MCF 10A (cell line): ENCODE measurements at regions of chr1 and their contacts with region 1.

Region 1: DNA sequence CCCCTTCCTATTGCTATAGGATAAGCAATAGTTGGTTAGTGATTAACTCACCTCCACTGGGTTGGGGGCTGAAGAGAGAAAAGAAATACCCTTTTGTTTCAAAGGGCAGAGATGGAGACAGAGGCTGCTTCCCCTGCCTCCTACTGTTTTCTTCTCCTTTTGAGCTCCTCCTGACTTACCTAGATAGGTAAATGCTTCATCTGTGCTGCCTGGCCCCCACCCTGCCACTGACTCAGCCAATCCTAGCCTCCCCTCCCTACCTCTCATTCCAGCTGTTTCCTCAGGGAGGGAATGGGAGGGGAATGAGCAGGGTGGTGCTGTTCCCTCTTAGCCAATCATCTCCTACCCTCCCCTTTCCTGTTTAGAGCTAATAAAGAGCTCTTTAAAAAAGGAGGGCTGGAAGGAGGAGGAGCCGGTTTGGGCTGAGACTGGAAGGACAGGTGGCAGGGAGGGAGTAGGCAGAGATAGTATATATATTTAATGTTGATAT is at the start of gene C1orf116:
- DNase-seq: peak; percentile 98
- H3K4me3 Mint-ChIP-seq: peak within 1 kb of the TSS; percentile 75
- H3K27ac Mint-ChIP-seq: peak within 1 kb of the TSS; percentile 86
- H3K4me1 Mint-ChIP-seq: peaks cover 79% of the 10 kb centered on the region
- H3K27me3 Mint-ChIP-seq: no peaks in the 10 kb centered on the region
- CTCF ChIP-seq: no peak
- total RNA-seq, gene C1orf116: 35.4 and 35.5 TPM in 2 replicates

Region 2: DNA sequence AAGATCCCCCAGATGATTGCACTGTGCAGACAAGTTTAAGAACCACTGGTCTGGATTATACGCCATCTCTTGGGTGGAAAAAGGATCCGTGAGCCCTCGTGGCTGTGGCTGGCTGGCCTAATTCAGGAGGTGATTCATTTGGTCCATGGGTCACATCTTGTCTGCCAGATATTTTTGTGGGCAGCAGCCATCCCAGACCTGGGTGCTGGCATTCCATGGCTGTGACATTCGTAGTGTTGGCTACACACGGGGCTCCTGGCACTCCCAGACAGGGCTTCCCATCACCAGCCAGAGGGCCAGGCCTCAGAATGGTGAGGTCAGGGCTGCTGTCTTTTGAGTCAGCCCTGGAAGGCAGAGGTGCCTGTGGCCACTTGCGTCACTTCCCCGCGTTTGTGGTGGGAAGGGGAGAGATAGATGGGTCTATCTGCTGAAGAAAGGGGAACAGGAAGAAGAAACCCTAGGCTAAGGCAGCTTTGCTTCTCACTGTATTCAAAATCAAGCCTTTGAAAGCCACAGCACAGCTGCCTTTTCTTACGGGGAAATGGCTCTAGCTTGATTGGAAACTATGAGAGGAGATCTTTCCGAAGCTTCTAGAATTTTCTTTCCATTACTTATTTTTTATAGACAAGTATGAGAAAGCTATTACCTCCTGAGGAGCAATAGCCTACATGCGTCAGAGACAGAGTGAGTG is 452.7 kb before region 1 on chr1:
- CTCF ChIA-PET with region 1: no interaction called
- POLR2A ChIA-PET with region 1: no interaction called
- intact Hi-C with region 1: no loop called
- DNase-seq: peak; percentile 23
- H3K4me3 Mint-ChIP-seq: no peak overlapping the region
- H3K27ac Mint-ChIP-seq: no peak overlapping the region
- H3K4me1 Mint-ChIP-seq: peaks cover 17% of the 10 kb centered on the region
- H3K27me3 Mint-ChIP-seq: no peaks in the 10 kb centered on the region
- CTCF ChIP-seq: no peak

Region 3: DNA sequence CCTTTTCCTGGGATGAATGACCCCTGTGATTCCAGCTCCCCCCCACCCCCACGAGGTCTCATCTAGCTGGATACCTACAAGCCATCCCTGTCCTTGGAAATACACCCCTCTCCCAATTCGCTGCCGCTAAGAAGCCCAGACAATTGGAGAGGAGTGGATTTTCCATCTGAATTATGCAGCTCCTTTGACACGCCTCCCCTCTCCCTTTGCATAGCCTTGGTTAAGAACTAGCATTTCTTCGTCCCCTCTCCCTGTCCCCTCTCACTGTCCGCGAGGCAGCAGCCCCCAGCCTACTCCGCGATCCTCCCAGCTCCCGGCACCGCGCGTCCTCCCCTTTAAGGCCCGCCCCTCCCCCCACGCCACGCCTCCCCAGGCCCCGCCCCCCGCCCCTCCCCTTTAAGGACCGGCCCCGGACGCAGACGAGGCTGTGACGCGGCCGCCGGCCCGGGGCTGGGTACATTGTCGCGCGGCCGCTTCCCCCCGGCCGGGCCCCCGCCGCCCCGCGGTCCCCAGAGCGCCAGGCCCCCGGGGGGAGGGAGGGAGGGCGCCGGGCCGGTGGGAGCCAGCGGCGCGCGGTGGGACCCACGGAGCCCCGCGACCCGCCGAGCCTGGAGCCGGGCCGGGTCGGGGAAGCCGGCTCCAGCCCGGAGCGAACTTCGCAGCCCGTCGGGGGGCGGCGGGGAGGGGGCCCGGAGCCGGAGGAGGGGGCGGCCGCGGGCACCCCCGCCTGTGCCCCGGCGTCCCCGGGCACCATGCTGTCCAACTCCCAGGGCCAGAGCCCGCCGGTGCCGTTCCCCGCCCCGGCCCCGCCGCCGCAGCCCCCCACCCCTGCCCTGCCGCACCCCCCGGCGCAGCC is 347.9 kb before region 1 on chr1 and contains the start of gene MAPKAPK2:
- CTCF ChIA-PET with region 1: no interaction called
- POLR2A ChIA-PET with region 1: interaction called, 12 read pairs
- intact Hi-C with region 1: no loop called
- DNase-seq: peak; percentile 83
- H3K4me3 Mint-ChIP-seq: peak within 1 kb of the TSS; percentile 93
- H3K27ac Mint-ChIP-seq: peak within 1 kb of the TSS; percentile 97
- H3K4me1 Mint-ChIP-seq: peaks cover 46% of the 10 kb centered on the region
- H3K27me3 Mint-ChIP-seq: no peaks in the 10 kb centered on the region
- CTCF ChIP-seq: no peak
- total RNA-seq, gene MAPKAPK2: 142 and 178 TPM in 2 replicates

Region 4: GRCh38 chr1:206890690-206891089 is 141.9 kb before region 1 on chr1:
- CTCF ChIA-PET with region 1: interaction called, 3 read pairs
- POLR2A ChIA-PET with region 1: interaction called, 20 read pairs
- intact Hi-C with region 1: no loop called
- DNase-seq: peak; percentile 96
- H3K4me3 Mint-ChIP-seq: peak overlapping the region; percentile 45
- H3K27ac Mint-ChIP-seq: peak overlapping the region; percentile 95
- H3K4me1 Mint-ChIP-seq: peaks cover 91% of the 10 kb centered on the region
- H3K27me3 Mint-ChIP-seq: no peaks in the 10 kb centered on the region
- CTCF ChIP-seq: no peak

Region 5: DNA sequence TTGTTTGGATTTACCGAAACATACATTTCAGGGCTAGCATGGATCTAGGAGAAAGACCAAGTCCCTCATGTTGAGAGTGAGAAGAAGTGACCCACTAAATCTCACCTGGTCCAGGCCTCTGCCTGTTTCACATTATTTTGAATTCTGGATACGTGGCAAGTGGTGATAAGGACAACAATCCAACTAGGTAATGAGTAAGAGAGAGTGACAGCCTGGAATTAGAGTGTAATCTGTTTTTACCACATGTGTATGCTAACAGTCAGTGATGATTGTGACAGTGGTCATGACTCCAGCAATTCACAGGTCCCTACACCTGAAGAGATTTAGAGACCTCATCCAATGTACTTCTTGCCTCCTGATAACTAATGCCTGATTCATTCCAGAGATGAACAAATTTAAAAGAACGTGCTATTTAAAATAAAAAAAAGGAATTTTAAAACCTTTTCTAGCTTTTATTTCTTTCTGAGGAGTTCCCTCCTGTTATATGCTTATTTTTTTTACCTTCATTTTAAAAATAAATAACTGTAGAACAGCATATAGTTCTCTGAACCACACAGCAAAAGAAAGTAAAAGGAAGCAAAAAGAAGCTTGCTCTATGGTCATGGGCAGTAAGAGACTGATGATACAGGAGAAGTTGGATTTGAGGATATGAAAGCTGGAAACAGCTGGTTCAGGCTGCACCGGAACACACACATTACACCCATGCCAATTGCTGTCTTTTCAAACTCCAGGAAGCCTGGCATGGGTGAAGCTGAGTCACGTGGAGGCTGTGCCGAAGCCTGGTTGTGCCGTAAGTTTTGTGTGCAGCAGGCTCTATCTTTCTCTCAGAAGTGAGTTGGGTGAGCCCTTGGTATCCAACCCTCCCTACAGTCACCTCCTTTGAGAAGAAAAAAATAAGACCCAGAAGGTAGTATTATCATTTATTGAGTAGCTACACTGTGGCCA is 14.7 kb before region 1 on chr1:
- CTCF ChIA-PET with region 1: interaction called, 280 read pairs
- POLR2A ChIA-PET with region 1: interaction called, 2,100 read pairs
- intact Hi-C with region 1: loop called (anchors 1 kb)
- DNase-seq: peak; percentile 89
- H3K4me3 Mint-ChIP-seq: no peak overlapping the region
- H3K27ac Mint-ChIP-seq: peak overlapping the region; percentile 60
- H3K4me1 Mint-ChIP-seq: peaks cover 49% of the 10 kb centered on the region
- H3K27me3 Mint-ChIP-seq: no peaks in the 10 kb centered on the region
- CTCF ChIP-seq: no peak